Endothelial cell of umbilical vein (primary cell): ENCODE measurements at regions of chr6 and their contacts with region 1.

Region 1: DNA sequence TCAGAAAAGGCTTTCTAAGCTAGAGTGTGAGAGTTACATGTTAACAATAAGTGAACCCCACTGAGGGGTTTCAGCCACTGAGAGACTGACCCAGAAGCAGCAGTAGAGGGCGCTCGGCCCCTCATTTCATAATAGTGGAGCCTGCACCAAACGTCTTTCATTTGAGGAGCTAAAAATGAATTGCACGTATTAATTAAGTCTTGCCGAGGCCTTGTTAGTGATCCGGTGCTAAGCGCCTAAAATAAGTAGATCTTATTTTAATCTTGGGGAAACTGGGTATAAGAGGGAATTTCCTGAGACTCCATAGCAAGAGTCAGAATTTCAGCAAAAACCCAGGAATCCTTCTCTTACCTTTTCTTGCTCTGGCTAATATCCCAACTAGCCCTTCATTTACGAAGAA is 209.7 kb downstream of the FARS2 start:
- DNase-seq: peak; percentile 66
- H3K4me3 ChIP-seq: no peak overlapping the region
- H3K27ac ChIP-seq: no peak overlapping the region
- H3K4me1 ChIP-seq: peaks cover 6% of the 10 kb centered on the region
- H3K27me3 ChIP-seq: no peaks in the 10 kb centered on the region
- CTCF ChIP-seq: peak; percentile 87 to 91
- POLR2A ChIP-seq: no peak

Region 2: GRCh38 chr6:5234874-5235273 is 236.2 kb before region 1 on chr6:
- CTCF ChIA-PET with region 1: no interaction called
- POLR2A ChIA-PET with region 1: no interaction called
- dilution Hi-C with region 1: no loop called
- intact Hi-C with region 1: no loop called
- DNase-seq: no peak
- H3K4me3 ChIP-seq: no peak overlapping the region
- H3K27ac ChIP-seq: no peak overlapping the region
- H3K4me1 ChIP-seq: peaks cover 15% of the 10 kb centered on the region
- H3K27me3 ChIP-seq: no peaks in the 10 kb centered on the region
- CTCF ChIP-seq: no peak
- POLR2A ChIP-seq: no peak

Region 3: DNA sequence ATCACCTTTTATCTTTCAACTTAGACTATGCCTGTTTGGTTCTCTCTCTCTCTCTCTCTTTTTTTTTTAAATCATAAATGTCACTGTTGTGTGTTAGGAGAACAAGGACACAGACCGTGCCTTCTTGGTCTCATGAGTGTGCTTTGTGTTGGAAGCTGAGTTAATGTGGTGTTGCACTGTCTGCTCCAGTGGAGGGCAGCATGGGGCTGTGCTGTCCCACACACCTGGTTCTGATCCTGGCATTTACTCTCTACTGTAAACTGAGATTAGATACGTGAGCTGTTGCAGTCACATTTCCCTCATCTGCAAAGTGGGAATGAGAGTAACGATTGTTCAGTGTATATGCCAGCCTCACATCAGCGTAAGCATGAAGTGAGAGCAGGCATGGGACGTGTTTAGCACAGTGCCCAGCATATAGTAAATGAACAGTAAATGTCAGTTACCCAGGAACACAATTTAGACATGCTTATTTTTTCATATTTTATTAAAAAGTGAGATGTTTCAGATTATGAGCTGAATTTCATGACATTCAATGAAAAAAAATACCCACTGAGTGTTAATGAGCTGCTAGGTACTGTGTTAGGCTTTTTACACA is 48.6 kb before region 1 on chr6:
- CTCF ChIA-PET with region 1: interaction called, 12 read pairs
- POLR2A ChIA-PET with region 1: no interaction called
- dilution Hi-C with region 1: no loop called
- intact Hi-C with region 1: no loop called
- DNase-seq: peak; percentile 40
- H3K4me3 ChIP-seq: no peak overlapping the region
- H3K27ac ChIP-seq: no peak overlapping the region
- H3K4me1 ChIP-seq: no peaks in the 10 kb centered on the region
- H3K27me3 ChIP-seq: no peaks in the 10 kb centered on the region
- CTCF ChIP-seq: peak; percentile 40 to 55
- POLR2A ChIP-seq: no peak

Region 4: GRCh38 chr6:5497896-5498578 is 27.0 kb after region 1 on chr6:
- CTCF ChIA-PET with region 1: interaction called, 26 read pairs
- POLR2A ChIA-PET with region 1: no interaction called
- dilution Hi-C with region 1: no loop called
- intact Hi-C with region 1: no loop called
- DNase-seq: peak; percentile 14
- H3K4me3 ChIP-seq: no peak overlapping the region
- H3K27ac ChIP-seq: peak overlapping the region; percentile 71
- H3K4me1 ChIP-seq: peaks cover 23% of the 10 kb centered on the region
- H3K27me3 ChIP-seq: no peaks in the 10 kb centered on the region
- CTCF ChIP-seq: no peak
- POLR2A ChIP-seq: no peak

Region 5: GRCh38 chr6:5665173-5665572 is 194.1 kb after region 1 on chr6:
- CTCF ChIA-PET with region 1: interaction called, 14 read pairs
- POLR2A ChIA-PET with region 1: no interaction called
- dilution Hi-C with region 1: no loop called
- intact Hi-C with region 1: loop called (anchors 5 kb)
- DNase-seq: no peak
- H3K4me3 ChIP-seq: no peak overlapping the region
- H3K27ac ChIP-seq: no peak overlapping the region
- H3K4me1 ChIP-seq: no peaks in the 10 kb centered on the region
- H3K27me3 ChIP-seq: no peaks in the 10 kb centered on the region
- CTCF ChIP-seq: no peak
- POLR2A ChIP-seq: no peak

Region 6: DNA sequence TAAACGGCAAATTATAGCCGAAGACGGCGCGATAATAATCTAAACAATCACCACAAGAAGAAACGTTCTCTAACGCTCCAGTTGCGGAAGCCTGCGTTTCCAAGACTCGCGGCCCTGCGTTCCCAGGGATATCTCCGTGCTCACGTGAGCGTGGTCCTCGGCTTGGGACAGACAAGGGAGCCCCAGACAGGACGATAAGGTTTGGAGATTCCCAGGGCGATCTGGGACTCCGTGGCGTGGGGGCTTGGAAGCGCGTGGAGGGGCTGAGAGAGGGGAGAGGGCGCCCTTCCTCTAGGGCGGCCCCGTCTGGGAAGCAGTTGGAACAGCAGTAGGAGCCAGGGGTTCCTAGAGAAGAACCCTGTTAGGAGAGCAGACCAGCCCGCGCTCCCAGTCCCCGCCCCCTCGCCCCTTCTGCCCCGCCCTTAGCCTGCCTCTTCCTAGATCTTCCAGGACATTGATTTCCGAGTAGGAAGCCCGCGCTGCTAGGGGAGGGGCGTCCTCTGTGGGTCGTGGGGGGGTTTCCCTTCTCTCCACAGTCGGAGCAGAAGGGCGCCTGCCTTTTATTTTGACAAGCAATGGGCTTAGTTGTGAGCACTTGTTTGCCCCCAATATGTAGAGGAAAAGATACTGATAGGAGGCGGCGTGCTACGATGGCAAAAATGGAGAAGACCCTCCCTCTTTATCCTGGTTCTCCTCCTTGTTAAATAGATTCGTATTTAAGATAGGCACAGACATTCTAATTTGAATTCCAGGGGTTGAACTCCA is 525.1 kb after region 1 on chr6:
- CTCF ChIA-PET with region 1: interaction called, 13 read pairs
- POLR2A ChIA-PET with region 1: no interaction called
- dilution Hi-C with region 1: no loop called
- intact Hi-C with region 1: loop called (anchors 1 kb)
- DNase-seq: peak; percentile 79
- H3K4me3 ChIP-seq: peak overlapping the region; percentile 56 to 99 (median 97)
- H3K27ac ChIP-seq: peak overlapping the region; percentile 18
- H3K4me1 ChIP-seq: peaks cover 9% of the 10 kb centered on the region
- H3K27me3 ChIP-seq: peaks cover 34 to 72% of the 10 kb centered on the region in 2 experiments
- CTCF ChIP-seq: peak; percentile 13 to 47
- POLR2A ChIP-seq: no peak

Region 7: DNA sequence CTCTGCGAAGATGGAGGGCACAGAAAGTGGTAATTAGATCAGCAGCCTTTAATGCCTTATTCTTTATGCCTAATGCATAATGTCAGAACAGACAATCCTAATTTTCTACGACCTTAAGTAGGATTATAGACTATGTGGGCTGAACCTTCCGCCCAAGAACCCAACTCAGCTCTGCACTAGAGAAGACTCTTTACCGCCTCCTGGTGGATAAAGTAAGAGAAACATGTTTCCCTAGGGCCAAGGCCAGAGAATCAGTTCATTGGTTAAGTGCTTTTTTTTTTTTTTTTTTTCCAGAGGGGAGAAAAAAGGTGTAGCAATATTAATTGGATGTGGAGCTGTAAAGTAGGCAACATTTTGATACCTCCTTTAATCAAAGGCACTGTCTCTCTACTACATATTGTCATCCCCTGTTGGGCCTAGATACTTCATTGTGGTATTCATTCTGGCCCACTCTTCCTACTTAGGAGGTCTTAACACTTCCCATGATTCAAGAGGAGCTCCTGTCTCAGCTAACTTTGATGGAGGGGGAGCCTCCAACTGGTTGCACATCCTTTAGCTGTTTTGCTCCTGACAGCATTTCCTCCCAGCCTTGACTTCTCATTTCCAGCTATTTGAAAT is 660.6 kb after region 1 on chr6:
- CTCF ChIA-PET with region 1: no interaction called
- POLR2A ChIA-PET with region 1: no interaction called
- dilution Hi-C with region 1: no loop called
- intact Hi-C with region 1: loop called (anchors 5 kb)
- DNase-seq: peak; percentile 6
- H3K4me3 ChIP-seq: no peak overlapping the region
- H3K27ac ChIP-seq: no peak overlapping the region
- H3K4me1 ChIP-seq: no peaks in the 10 kb centered on the region
- H3K27me3 ChIP-seq: no peaks in the 10 kb centered on the region
- CTCF ChIP-seq: peak in 1 of 2 donors; percentile 10
- POLR2A ChIP-seq: no peak